Vagina (tissue), 2 donors: ENCODE measurements at regions of chr6 and their contacts with region 1.

Region 1: DNA sequence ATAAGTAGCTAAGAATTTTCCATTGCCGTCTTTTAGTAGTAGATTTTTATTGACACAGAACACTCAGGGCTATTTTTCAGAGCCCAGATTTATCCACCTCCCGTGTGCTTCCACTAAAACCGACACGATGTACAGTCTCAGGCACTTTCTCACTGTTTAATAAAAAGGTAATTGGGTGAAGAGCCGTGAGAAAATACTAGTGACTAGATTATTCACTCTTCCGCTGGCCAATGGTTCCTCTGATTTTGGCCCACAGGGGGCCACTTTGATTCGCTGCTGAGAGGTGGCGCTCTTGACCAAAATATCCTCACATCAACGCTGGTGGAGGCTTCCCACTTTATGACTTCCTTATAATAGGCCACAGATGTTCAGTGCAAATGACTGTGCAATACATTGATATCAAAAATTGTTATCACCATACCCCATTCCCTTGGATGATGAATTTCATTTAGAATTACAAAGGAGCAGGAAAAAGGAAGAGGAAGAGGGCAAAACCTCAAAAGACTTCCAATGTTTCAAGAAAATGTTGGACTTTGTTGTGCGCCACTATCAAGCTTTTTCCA is 12.3 kb upstream of the HDDC2 start:
- DNase-seq: no peak
- H3K4me3 ChIP-seq: no peak overlapping the region
- H3K27ac ChIP-seq: no peak overlapping the region
- H3K4me1 ChIP-seq: no peaks in the 10 kb centered on the region
- H3K27me3 ChIP-seq: no peaks in the 10 kb centered on the region
- CTCF ChIP-seq: peak; percentile 36 to 79 (median 70)
- POLR2A ChIP-seq: no peak

Region 2: GRCh38 chr6:125258651-125259349 is 55.3 kb before region 1 on chr6:
- intact Hi-C with region 1: no loop called
- DNase-seq: no peak
- H3K4me3 ChIP-seq: no peak overlapping the region
- H3K27ac ChIP-seq: no peak overlapping the region
- H3K4me1 ChIP-seq: no peaks in the 10 kb centered on the region
- H3K27me3 ChIP-seq: no peaks in the 10 kb centered on the region
- CTCF ChIP-seq: no peak
- POLR2A ChIP-seq: no peak

Region 3: GRCh38 chr6:125469915-125470314 is 155.8 kb after region 1 on chr6:
- intact Hi-C with region 1: no loop called
- DNase-seq: no peak
- H3K4me3 ChIP-seq: no peak overlapping the region
- H3K27ac ChIP-seq: no peak overlapping the region
- H3K4me1 ChIP-seq: no peaks in the 10 kb centered on the region
- H3K27me3 ChIP-seq: no peaks in the 10 kb centered on the region
- CTCF ChIP-seq: no peak
- POLR2A ChIP-seq: no peak

Region 4: GRCh38 chr6:125759184-125759902 is 445.2 kb after region 1 on chr6:
- intact Hi-C with region 1: loop called (anchors 5 kb)
- DNase-seq: no peak
- H3K4me3 ChIP-seq: no peak overlapping the region
- H3K27ac ChIP-seq: no peak overlapping the region
- H3K4me1 ChIP-seq: no peaks in the 10 kb centered on the region
- H3K27me3 ChIP-seq: no peaks in the 10 kb centered on the region
- CTCF ChIP-seq: no peak
- POLR2A ChIP-seq: no peak